ENCODE measurements at regions of chr15 and their contacts with region 1.

Region 1: DNA sequence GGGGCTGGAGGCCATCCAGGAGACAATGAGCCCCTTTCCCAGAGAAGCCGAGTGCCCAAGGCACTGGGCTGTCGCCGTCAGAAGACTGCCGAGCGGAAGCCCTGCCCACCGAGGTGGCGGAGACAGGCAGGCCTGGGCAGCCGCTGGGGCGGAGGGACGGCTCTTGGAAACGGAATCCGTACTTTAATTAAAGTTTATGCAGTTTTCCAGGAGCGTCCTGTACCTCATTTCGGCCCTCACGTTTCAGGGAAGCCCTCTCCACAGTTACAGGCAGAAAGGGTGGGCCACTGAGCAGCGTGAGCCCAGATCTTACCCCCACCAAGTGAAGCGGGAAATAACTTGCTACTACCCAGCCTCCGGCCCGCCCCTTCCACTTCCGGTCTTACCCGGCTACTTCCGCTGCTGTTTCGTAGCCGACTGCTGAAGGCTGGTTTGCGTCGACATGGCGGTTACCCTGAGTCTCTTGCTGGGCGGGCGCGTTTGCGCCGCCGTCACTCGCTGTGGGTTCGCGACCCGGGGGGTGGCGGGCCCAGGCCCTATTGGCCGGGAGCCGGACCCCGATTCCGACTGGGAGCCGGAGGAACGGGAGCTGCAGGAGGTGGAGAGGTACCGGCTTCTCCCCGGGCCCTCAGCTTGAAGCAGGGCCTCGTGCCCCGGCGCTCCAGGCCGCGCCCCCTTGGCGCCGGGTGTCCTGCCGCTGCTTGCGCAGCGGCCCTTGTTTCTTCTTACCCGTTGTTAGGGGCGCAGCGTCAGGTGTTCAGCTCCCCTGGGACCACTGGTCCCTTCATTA is at the start of gene NGRN:
- DNase-seq: peak; percentile 80 to 85
- H3K4me3 ChIP-seq: peak within 1 kb of the TSS; percentile 82
- H3K27ac ChIP-seq: peak within 1 kb of the TSS; percentile 89
- H3K4me1 ChIP-seq: peaks cover 56% of the 10 kb centered on the region
- H3K27me3 ChIP-seq: no peaks in the 10 kb centered on the region
- CTCF ChIP-seq: no peak
- total RNA-seq, gene NGRN: 57.4 TPM in 2 replicates

Region 2: DNA sequence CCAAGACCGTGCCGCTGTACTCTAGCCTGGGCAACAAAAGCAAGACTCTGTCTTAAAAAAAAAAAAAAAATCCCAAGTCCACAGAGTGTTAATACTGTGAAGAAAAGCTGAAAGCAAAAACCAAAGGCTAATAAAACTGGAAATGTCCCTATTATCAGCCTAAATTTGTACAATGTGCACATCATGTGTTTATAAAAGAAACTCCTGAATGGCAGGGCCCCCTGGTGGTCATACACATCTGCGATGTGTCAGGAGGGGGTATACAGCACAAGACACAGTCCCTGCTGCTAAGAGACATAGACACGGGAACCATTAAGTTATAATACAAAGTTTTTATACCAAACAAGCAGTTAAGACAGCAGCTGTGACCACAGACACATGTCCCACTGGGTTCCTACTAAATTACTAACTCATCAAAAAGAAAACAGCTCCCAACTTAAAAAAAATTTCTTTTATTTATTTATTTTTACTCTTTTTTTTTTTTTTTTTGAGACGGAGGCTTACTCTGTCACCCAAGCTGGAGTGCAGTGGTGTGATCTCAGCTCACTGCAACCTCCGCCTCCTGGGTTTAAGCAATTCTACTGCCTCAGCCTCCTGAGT is 194.2 kb before region 1 on chr15:
- CTCF ChIA-PET with region 1: no interaction called
- POLR2A ChIA-PET with region 1: no interaction called
- intact Hi-C with region 1: no loop called
- DNase-seq: peak; percentile 54 to 65
- H3K4me3 ChIP-seq: no peak overlapping the region
- H3K27ac ChIP-seq: no peak overlapping the region
- H3K4me1 ChIP-seq: no peaks in the 10 kb centered on the region
- H3K27me3 ChIP-seq: no peaks in the 10 kb centered on the region
- CTCF ChIP-seq: peak; percentile 79

Region 3: GRCh38 chr15:90249203-90249863 is 16.1 kb before region 1 on chr15 and contains the start of gene TTLL13:
- CTCF ChIA-PET with region 1: no interaction called
- POLR2A ChIA-PET with region 1: interaction called, 4 read pairs
- intact Hi-C with region 1: loop called (anchors 2 kb)
- DNase-seq: peak; percentile 70 to 88
- H3K4me3 ChIP-seq: peak within 1 kb of the TSS; percentile 75
- H3K27ac ChIP-seq: no peak within 1 kb of the TSS
- H3K4me1 ChIP-seq: 0 out of 2 replicates have a peak, but pooled peaks cover 7% of the 10 kb centered on the region
- H3K27me3 ChIP-seq: no peaks in the 10 kb centered on the region
- CTCF ChIP-seq: no peak
- total RNA-seq, gene TTLL13: 0.93 and 0.96 TPM in 2 replicates

Region 4: DNA sequence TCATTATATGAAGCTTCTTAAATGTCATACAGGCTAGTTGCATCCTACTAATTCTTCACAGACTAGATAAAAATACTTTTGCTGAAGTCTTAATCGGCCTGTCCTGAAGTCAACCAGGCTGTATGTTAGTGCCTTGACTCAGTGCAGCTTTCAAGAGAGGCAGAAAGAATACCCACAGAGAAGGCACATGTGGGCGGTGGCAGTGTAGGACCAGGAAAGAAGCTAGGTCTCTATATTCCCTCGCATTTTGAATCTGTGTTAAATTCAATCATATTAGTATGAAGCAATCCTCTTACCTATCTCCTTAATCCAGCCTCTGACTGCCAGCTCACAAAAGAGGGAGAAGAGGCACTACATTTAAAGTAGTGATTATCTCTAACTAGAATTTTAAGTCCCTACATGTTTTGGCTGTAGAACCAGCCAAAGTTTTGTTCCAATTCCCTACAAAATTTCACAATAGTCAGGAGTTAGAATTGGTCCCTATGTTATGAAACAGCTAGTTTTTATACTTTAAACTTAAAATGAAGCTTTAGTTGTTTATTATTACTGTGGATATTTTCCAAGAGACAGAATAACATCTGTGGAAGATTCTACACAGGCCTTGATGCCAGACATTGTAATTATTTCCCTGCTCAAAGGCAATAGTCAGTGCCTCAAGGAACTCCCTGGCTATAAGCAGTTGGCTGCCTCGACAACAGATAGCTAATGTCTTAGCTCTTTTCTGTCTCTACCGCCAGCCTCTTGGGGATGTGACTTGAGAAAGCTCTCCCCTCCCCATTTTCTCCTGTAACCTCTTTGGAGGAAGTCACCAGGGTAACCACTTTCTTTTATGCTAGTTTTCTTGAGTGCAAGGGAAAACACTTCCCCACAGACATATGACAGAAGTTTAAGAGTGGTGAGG is 296.1 kb after region 1 on chr15:
- CTCF ChIA-PET with region 1: no interaction called
- POLR2A ChIA-PET with region 1: no interaction called
- intact Hi-C with region 1: no loop called
- DNase-seq: no peak
- H3K4me3 ChIP-seq: no peak overlapping the region
- H3K27ac ChIP-seq: no peak overlapping the region
- H3K4me1 ChIP-seq: no peaks in the 10 kb centered on the region
- H3K27me3 ChIP-seq: no peaks in the 10 kb centered on the region
- CTCF ChIP-seq: no peak